ENCODE measurements at regions of chr5 and their contacts with region 1.

Region 1: GRCh38 chr5:139633295-139634027 is 14.7 kb upstream of the CXXC5 start:
- DNase-seq: no peak
- ATAC-seq: peak; percentile 44
- H3K4me3 ChIP-seq: no peak overlapping the region
- H3K27ac ChIP-seq: no peak overlapping the region
- H3K4me1 ChIP-seq: peaks cover 55% of the 10 kb centered on the region
- H3K27me3 ChIP-seq: no peaks in the 10 kb centered on the region
- CTCF ChIP-seq: peak; percentile 99; a peak in 5 of 6 replicates
- EP300 ChIP-seq: no peak
- POLR2A ChIP-seq: peak; percentile 72
- RAD21 ChIP-seq: peak; percentile 91

Region 2: DNA sequence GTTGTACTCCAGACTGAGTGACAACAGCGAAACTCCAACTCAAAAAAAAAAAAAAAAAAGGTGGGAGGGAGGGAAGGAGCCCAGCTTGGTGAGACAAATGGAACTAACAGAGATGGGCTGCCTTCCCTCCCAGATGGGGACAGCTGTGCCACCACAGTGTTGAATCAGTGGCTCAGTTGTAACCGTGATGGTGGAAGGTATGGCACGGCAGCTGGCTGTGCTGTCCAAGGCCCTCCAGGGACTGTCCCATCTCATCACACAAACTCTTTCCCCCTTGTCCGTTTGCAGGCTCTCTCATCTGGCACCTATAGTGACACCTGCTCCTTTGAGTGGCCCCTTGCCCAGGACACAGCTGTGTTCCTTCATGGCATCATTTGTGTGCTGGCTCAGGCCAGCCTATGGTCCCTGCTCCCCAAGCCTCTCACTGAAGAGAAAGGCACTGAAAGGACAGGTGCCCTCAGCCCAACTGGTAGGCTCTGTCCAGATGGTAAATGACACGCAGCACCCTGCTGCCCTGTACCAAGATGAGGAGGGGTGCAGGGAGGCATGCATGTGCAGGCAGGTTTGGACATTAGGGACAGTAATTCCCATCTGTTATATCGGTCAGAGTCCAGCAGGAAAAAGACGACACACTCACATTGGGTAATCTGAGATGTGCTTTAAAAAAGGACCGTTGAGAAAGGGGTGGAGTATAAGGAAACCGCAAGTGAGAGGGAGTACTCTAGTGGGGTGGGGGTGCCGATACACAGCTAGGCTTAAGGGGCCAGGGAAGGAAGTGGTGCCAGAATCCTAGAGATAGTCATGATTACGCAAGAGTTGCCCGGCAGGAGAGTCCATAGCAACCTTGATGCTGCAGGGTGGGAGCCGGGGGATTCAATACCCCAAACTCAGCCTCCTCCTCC is 158.3 kb before region 1 on chr5:
- CTCF ChIA-PET with region 1: no interaction called
- POLR2A ChIA-PET with region 1: no interaction called
- RAD21 ChIA-PET with region 1: no interaction called
- SMC1A ChIA-PET with region 1: no interaction called
- in situ Hi-C with region 1: no loop called
- intact Hi-C with region 1: no loop called
- DNase-seq: no peak
- ATAC-seq: peak; percentile 17
- H3K4me3 ChIP-seq: no peak overlapping the region
- H3K27ac ChIP-seq: no peak overlapping the region
- H3K4me1 ChIP-seq: peaks cover 12% of the 10 kb centered on the region
- H3K27me3 ChIP-seq: no peaks in the 10 kb centered on the region
- CTCF ChIP-seq: no peak
- EP300 ChIP-seq: no peak
- POLR2A ChIP-seq: no peak
- RAD21 ChIP-seq: no peak

Region 3: GRCh38 chr5:139524932-139525585 is 108.4 kb before region 1 on chr5:
- CTCF ChIA-PET with region 1: interaction called, 45 read pairs
- POLR2A ChIA-PET with region 1: interaction called, 15 read pairs
- RAD21 ChIA-PET with region 1: interaction called, 19 read pairs
- SMC1A ChIA-PET with region 1: interaction called, 7 read pairs
- in situ Hi-C with region 1: no loop called
- intact Hi-C with region 1: no loop called
- DNase-seq: no peak
- ATAC-seq: peak; percentile 88
- H3K4me3 ChIP-seq: 0 out of 2 replicates have a peak overlapping the region, but pooled peaks have one; percentile 2
- H3K27ac ChIP-seq: peak overlapping the region; percentile 59
- H3K4me1 ChIP-seq: peaks cover 28% of the 10 kb centered on the region
- H3K27me3 ChIP-seq: no peaks in the 10 kb centered on the region
- CTCF ChIP-seq: no peak
- EP300 ChIP-seq: 0 out of 4 replicates have a peak, but pooled peaks of 1 of the 2 experiments have one; percentile 24
- POLR2A ChIP-seq: no peak
- RAD21 ChIP-seq: no peak

Region 4: GRCh38 chr5:139611703-139612584 is 21.5 kb before region 1 on chr5:
- CTCF ChIA-PET with region 1: interaction called, 20 read pairs
- POLR2A ChIA-PET with region 1: no interaction called
- RAD21 ChIA-PET with region 1: interaction called, 4 read pairs
- SMC1A ChIA-PET with region 1: interaction called, 5 read pairs
- in situ Hi-C with region 1: no loop called
- intact Hi-C with region 1: no loop called
- DNase-seq: no peak
- ATAC-seq: peak; percentile 90
- H3K4me3 ChIP-seq: no peak overlapping the region
- H3K27ac ChIP-seq: peak overlapping the region; percentile 45; the same call in 1 of the 2 replicates
- H3K4me1 ChIP-seq: peaks cover 9% of the 10 kb centered on the region; the same call in 1 of the 2 replicates
- H3K27me3 ChIP-seq: no peaks in the 10 kb centered on the region
- CTCF ChIP-seq: no peak
- EP300 ChIP-seq: no peak
- POLR2A ChIP-seq: no peak
- RAD21 ChIP-seq: no peak

Region 5: DNA sequence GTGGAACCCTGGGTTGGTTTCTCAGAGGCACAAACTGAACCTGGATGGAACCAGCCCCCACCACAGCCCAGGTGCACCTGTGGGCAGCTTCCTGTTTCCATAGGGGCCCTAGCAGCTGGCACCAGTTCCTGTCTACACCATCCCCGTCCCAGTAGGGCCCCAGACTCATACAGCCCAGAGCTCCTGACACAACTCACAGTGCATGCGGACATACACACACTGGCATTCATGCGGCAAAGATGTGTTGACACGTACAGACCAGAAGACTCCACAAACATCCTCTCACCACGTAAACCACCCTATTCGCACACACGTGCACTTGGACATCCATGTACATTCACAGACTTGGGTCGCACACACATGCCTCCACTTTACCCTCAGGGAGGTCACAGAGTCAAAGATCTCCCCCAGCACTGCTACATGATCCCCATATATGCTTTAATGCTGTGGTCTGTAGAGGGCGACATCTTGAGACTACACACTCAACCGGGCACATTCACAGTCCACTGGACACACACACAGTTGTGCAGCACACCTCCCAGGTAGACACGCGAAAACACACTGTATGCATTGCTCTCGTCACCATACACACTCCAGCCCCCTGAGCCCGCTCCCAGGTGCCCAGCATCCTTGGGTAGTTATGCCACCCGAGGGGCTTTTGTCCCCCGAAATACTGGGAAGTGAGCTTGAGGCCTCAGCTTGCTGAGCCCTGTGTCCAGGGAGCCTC is 37.1 kb after region 1 on chr5:
- CTCF ChIA-PET with region 1: interaction called, 186 read pairs
- POLR2A ChIA-PET with region 1: interaction called, 163 read pairs
- RAD21 ChIA-PET with region 1: interaction called, 162 read pairs
- SMC1A ChIA-PET with region 1: interaction called, 100 read pairs
- in situ Hi-C with region 1: no loop called
- intact Hi-C with region 1: loop called (anchors 1 kb)
- DNase-seq: peak; percentile 90
- ATAC-seq: peak; percentile 59
- H3K4me3 ChIP-seq: peak overlapping the region; percentile 84
- H3K27ac ChIP-seq: peak overlapping the region; percentile 99
- H3K4me1 ChIP-seq: peaks cover 54% of the 10 kb centered on the region
- H3K27me3 ChIP-seq: no peaks in the 10 kb centered on the region
- CTCF ChIP-seq: peak; percentile 52 to 65 (median 53)
- EP300 ChIP-seq: peak in 1 of 2 experiments; percentile 37; a peak in 1 of 4 replicates
- POLR2A ChIP-seq: no peak
- RAD21 ChIP-seq: peak; percentile 34

Region 6: DNA sequence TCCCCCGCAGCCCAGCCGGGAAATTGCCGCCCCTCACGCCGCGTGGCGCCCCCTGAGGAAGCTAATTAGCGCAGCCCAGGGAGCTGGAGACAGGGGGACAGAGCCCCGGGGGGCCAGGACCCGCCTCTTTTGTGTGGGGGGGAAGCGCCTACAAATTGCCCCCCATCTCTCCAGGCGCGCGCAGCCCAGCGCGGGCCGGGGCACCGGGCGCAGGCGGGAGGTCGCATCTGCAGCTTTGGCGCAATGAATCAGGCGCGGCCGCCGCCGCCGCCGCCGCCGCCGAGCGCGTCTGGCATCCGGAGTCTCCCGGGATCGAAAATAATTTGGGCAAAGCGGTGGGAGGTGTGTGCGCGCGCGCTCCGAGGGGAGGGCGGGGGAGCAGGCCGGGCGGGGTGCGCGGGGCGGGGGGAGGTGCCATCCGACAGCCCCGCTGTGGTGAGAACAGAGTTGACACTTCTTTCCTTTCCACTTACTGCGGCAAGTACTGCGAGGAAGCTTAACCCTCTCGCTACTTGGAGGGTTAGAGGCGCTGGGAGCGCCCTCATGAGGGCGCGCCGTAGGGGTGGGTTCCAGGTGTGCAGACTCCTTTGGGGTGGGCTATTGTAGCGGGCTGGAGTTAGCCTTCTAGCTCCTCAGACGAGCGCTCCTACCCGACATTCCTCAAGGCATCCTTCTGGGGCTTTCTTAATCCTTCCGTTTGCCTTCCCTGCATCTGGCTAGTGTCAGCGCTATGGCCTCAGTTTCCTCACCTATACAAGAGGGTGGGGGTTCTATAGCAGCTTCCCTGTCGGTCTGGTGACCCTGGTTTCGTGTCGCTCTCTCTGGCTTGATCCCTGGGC is 77.8 kb after region 1 on chr5:
- CTCF ChIA-PET with region 1: interaction called, 82 read pairs
- POLR2A ChIA-PET with region 1: interaction called, 15 read pairs
- RAD21 ChIA-PET with region 1: interaction called, 78 read pairs
- SMC1A ChIA-PET with region 1: interaction called, 31 read pairs
- in situ Hi-C with region 1: no loop called
- intact Hi-C with region 1: no loop called
- DNase-seq: no peak
- ATAC-seq: peak; percentile 72
- H3K4me3 ChIP-seq: peak overlapping the region; percentile 75
- H3K27ac ChIP-seq: no peak overlapping the region
- H3K4me1 ChIP-seq: peaks cover 21% of the 10 kb centered on the region
- H3K27me3 ChIP-seq: peaks cover 5 to 6% of the 10 kb centered on the region in 2 experiments; a peak in 3 of 4 replicates
- CTCF ChIP-seq: peak; percentile 4 to 38 (median 29); a peak in 3 of 6 replicates
- EP300 ChIP-seq: no peak
- POLR2A ChIP-seq: no peak
- RAD21 ChIP-seq: peak; percentile 39

Region 7: GRCh38 chr5:139765409-139766217 is 132.2 kb after region 1 on chr5:
- CTCF ChIA-PET with region 1: interaction called, 291 read pairs
- POLR2A ChIA-PET with region 1: interaction called, 3 read pairs
- RAD21 ChIA-PET with region 1: interaction called, 61 read pairs
- SMC1A ChIA-PET with region 1: interaction called, 166 read pairs
- in situ Hi-C with region 1: loop called (anchors 5 kb)
- intact Hi-C with region 1: loop called (anchors 1 kb)
- DNase-seq: no peak
- ATAC-seq: peak; percentile 94
- H3K4me3 ChIP-seq: peak overlapping the region; percentile 71; the same call in 1 of the 2 replicates
- H3K27ac ChIP-seq: no peak overlapping the region
- H3K4me1 ChIP-seq: no peaks in the 10 kb centered on the region
- H3K27me3 ChIP-seq: peaks cover 11 to 14% of the 10 kb centered on the region in 2 experiments
- CTCF ChIP-seq: peak; percentile 57 to 93 (median 86)
- EP300 ChIP-seq: no peak
- POLR2A ChIP-seq: no peak
- RAD21 ChIP-seq: peak; percentile 77

Region 8: DNA sequence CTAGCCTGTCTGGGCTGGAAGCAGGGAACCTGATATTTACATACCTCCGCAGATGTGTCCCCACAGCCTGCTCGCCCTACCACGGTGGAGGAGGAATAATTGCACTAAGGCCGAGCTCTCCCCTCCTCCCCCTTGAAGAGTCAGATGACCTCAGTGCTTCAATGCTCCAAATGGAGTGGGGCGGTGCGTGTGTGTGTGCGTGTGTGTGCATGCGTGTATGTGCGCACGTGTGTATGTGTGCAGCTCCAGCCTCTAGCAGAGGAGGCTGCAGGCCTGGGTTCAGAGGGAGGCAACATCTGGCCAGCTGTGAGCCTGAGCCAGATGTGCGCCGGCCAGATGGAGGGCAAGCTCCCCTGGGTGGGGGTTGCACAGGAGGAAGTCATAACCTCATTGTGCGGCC is 319.1 kb after region 1 on chr5:
- CTCF ChIA-PET with region 1: no interaction called
- POLR2A ChIA-PET with region 1: no interaction called
- RAD21 ChIA-PET with region 1: no interaction called
- SMC1A ChIA-PET with region 1: no interaction called
- in situ Hi-C with region 1: no loop called
- intact Hi-C with region 1: no loop called
- DNase-seq: no peak
- ATAC-seq: no peak
- H3K4me3 ChIP-seq: no peak overlapping the region
- H3K27ac ChIP-seq: no peak overlapping the region
- H3K4me1 ChIP-seq: peaks cover 43% of the 10 kb centered on the region
- H3K27me3 ChIP-seq: no peaks in the 10 kb centered on the region
- CTCF ChIP-seq: no peak
- EP300 ChIP-seq: no peak
- POLR2A ChIP-seq: no peak
- RAD21 ChIP-seq: no peak

Region 9: DNA sequence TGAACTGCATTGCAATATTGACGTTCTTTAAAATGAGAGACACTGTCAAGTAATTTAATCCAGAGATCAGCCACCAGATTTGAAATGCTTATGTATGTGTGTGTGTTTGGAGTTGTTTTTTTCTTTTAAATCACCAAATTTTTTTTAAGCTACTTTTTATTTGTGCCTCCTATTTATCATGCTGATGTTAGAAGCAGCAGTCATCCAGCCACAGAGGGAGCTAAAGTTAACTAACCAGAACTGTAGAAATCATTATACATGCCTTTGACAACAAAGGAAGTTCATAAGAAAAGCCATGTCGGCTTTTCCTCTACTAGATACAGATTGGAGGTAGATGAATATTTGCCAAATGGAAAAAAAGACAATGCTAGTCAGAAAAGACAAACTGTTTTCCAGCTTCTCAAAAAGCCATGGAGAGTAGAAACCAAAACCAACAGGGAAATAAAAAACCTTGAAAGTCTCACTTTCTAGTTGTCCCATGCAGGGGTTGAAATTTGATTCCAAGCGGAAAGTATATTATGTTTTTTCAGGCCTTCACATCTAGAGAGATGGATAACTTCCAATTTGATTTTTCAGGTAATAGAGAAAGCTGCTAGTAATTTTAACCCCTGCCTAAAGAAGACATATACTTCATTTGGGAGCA is 485.0 kb after region 1 on chr5:
- CTCF ChIA-PET with region 1: no interaction called
- POLR2A ChIA-PET with region 1: no interaction called
- RAD21 ChIA-PET with region 1: no interaction called
- SMC1A ChIA-PET with region 1: no interaction called
- in situ Hi-C with region 1: no loop called
- intact Hi-C with region 1: no loop called
- DNase-seq: no peak
- ATAC-seq: no peak
- H3K4me3 ChIP-seq: no peak overlapping the region
- H3K27ac ChIP-seq: no peak overlapping the region
- H3K4me1 ChIP-seq: peaks cover 4% of the 10 kb centered on the region; the same call in 1 of the 2 replicates
- H3K27me3 ChIP-seq: no peaks in the 10 kb centered on the region
- CTCF ChIP-seq: no peak; a peak in 1 of 6 replicates
- EP300 ChIP-seq: no peak
- POLR2A ChIP-seq: no peak
- RAD21 ChIP-seq: no peak

Measured in GM12878 (cell line).